ENCODE measurements at regions of chr22 and their contacts with region 1.

Region 1: GRCh38 chr22:42179616-42180015 is 49.0 kb upstream of the CYP2D6 start:
- DNase-seq: no peak
- ATAC-seq: no peak
- H3K4me3 ChIP-seq: no peak overlapping the region
- H3K27ac ChIP-seq: peak overlapping the region; percentile 83
- H3K4me1 ChIP-seq: peaks cover 18 to 25% of the 10 kb centered on the region in 2 experiments; a peak in 4 of 5 replicates
- H3K27me3 ChIP-seq: no peaks in the 10 kb centered on the region
- CTCF ChIP-seq: no peak
- EP300 ChIP-seq: no peak
- POLR2A ChIP-seq: no peak
- RAD21 ChIP-seq: no peak

Region 2: GRCh38 chr22:41642331-41643110 is 537.1 kb before region 1 on chr22:
- CTCF ChIA-PET with region 1: no interaction called
- POLR2A ChIA-PET with region 1: no interaction called
- in situ Hi-C with region 1: no loop called
- intact Hi-C with region 1: no loop called
- DNase-seq: no peak
- ATAC-seq: no peak
- H3K4me3 ChIP-seq: no peak overlapping the region
- H3K27ac ChIP-seq: no peak overlapping the region
- H3K4me1 ChIP-seq: no peaks in the 10 kb centered on the region
- H3K27me3 ChIP-seq: no peaks in the 10 kb centered on the region
- CTCF ChIP-seq: no peak
- EP300 ChIP-seq: no peak
- POLR2A ChIP-seq: no peak
- RAD21 ChIP-seq: no peak

Region 3: GRCh38 chr22:42114721-42115120 is 64.9 kb before region 1 on chr22:
- CTCF ChIA-PET with region 1: no interaction called
- POLR2A ChIA-PET with region 1: no interaction called
- in situ Hi-C with region 1: no loop called
- intact Hi-C with region 1: no loop called
- DNase-seq: peak in 1 of 4 experiments; percentile 21
- ATAC-seq: no peak
- H3K4me3 ChIP-seq: no peak overlapping the region
- H3K27ac ChIP-seq: no peak overlapping the region
- H3K4me1 ChIP-seq: peaks cover 0 to 4% of the 10 kb centered on the region in 2 experiments; a peak in 2 of 5 replicates
- H3K27me3 ChIP-seq: no peaks in the 10 kb centered on the region
- CTCF ChIP-seq: peak; percentile 16 to 35 (median 32); a peak in 4 of 6 replicates
- EP300 ChIP-seq: no peak
- POLR2A ChIP-seq: no peak
- RAD21 ChIP-seq: no peak

Region 4: GRCh38 chr22:42162728-42163489 is 16.7 kb before region 1 on chr22:
- CTCF ChIA-PET with region 1: no interaction called
- POLR2A ChIA-PET with region 1: no interaction called
- in situ Hi-C with region 1: no loop called
- intact Hi-C with region 1: no loop called
- DNase-seq: no peak
- ATAC-seq: no peak
- H3K4me3 ChIP-seq: no peak overlapping the region
- H3K27ac ChIP-seq: no peak overlapping the region
- H3K4me1 ChIP-seq: peaks cover 0 to 7% of the 10 kb centered on the region in 2 experiments; a peak in 2 of 5 replicates
- H3K27me3 ChIP-seq: no peaks in the 10 kb centered on the region
- CTCF ChIP-seq: no peak
- EP300 ChIP-seq: no peak
- POLR2A ChIP-seq: no peak
- RAD21 ChIP-seq: no peak

Region 5: DNA sequence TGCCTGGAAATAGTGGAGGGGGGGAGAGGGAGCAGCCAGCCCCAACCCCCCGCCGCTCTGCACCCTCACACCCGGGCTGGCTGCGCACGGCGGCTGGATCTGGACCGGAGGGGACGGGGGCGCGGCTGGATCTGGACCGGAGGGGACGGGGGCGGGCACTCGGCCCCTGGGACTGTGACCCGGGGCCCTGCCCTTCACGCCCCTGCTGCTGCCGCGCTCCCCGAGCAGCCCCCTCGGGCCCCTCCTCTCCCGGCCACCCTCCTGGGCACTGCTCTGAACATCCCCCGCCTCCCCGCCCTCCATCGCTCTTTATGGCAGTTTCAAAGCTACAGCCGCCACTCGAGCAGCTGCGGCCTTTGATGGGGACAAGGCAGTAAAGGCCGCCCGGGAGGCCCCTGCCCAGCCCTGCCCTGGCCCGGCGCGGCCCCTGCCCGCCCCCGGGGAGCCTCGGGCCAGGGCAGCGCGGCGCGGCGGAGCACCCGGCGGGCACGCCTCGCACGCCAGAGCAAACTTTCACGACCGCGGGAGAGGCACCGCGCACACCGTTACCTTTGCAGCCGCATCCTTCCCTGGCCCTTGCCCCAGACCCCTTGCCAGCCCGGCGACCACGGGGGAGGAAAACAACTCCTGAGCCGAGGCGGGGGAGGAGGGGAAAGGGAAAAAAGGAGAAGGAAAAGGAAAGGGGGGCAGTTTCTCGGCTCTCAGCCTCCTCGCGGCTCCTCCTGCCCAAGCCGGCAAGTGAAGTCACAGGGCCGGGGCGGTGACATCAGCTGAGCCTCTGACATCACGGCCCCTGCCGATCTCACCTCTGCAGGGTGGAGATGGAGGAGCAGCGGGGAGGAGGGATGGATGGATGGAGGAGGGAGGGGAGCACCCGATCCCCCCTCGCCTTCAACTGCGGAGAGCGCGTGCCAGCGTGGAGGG is 103.9 kb after region 1 on chr22:
- CTCF ChIA-PET with region 1: no interaction called
- POLR2A ChIA-PET with region 1: no interaction called
- in situ Hi-C with region 1: loop called (anchors 10 kb)
- intact Hi-C with region 1: no loop called
- DNase-seq: peak in 2 of 4 experiments; percentile 15 to 23
- ATAC-seq: no peak
- H3K4me3 ChIP-seq: no peak overlapping the region
- H3K27ac ChIP-seq: no peak overlapping the region
- H3K4me1 ChIP-seq: peaks cover 0 to 19% of the 10 kb centered on the region in 2 experiments; a peak in 2 of 5 replicates
- H3K27me3 ChIP-seq: no peaks in the 10 kb centered on the region; a peak in 1 of 5 replicates
- CTCF ChIP-seq: no peak
- EP300 ChIP-seq: no peak
- POLR2A ChIP-seq: no peak
- RAD21 ChIP-seq: no peak